ENCODE measurements at regions of chr1 and their contacts with region 1.

Region 1: GRCh38 chr1:24970399-24970753 is 40.3 kb upstream of the RUNX3 start:
- DNase-seq: no peak
- ATAC-seq: no peak
- H3K4me3 Mint-ChIP-seq: peak overlapping the region; percentile 85
- H3K27ac Mint-ChIP-seq: peak overlapping the region; percentile 91
- H3K4me1 Mint-ChIP-seq: peaks cover 79% of the 10 kb centered on the region
- H3K27me3 Mint-ChIP-seq: no peaks in the 10 kb centered on the region

Region 2: GRCh38 chr1:24987875-24988557 is 17.6 kb after region 1 on chr1:
- POLR2A ChIA-PET with region 1: interaction called, 266 read pairs
- DNase-seq: peak; percentile 29
- ATAC-seq: peak; percentile 44
- H3K4me3 Mint-ChIP-seq: peak overlapping the region; percentile 50
- H3K27ac Mint-ChIP-seq: peak overlapping the region; percentile 87
- H3K4me1 Mint-ChIP-seq: peaks cover 92% of the 10 kb centered on the region
- H3K27me3 Mint-ChIP-seq: no peaks in the 10 kb centered on the region

Region 3: DNA sequence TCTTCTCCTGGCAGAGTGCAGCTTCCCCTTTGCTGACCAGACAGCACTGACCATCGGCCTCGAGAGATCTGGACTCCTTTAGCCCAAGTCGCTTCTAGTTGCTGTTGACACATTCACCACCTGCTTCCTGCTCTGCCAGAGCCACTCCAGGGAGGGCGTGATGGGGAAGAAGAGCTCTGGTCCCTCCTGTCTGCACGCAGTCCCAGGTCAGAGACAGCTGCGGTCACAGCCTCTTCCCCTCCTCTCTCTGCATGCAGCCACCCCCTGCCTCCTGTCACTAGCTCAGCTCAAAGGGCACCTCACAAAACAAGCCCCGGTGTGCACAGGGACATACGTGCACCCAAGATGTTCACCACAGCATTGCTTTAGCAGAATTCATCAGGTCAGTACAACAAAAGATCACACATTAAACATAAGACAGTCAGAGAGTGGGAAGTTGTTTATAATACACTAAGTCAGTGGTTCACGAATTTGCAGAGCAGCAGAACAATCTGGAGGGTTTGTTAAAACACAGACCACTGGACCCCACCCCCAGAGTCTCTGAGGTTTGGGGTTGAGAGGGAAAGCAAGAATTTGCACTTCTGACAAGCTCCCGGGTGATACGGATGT is 129.1 kb after region 1 on chr1:
- POLR2A ChIA-PET with region 1: interaction called, 50 read pairs
- DNase-seq: peak; percentile 67
- ATAC-seq: peak; percentile 57
- H3K4me3 Mint-ChIP-seq: peak overlapping the region; percentile 73
- H3K27ac Mint-ChIP-seq: peak overlapping the region; percentile 87
- H3K4me1 Mint-ChIP-seq: peaks cover 76% of the 10 kb centered on the region
- H3K27me3 Mint-ChIP-seq: no peaks in the 10 kb centered on the region